ENCODE measurements at regions of chr5 and their contacts with region 1.

Region 1: GRCh38 chr5:177403792-177404640 is 3.6 kb upstream of the PFN3 start:
- DNase-seq: peak; percentile 89
- ATAC-seq: peak; percentile 87
- H3K4me3 Mint-ChIP-seq: peak overlapping the region; percentile 73
- H3K27ac Mint-ChIP-seq: peak overlapping the region; percentile 47
- H3K4me1 Mint-ChIP-seq: peaks cover 26% of the 10 kb centered on the region
- H3K27me3 Mint-ChIP-seq: peaks cover 23% of the 10 kb centered on the region
- CTCF ChIP-seq: peak; percentile 83

Region 2: DNA sequence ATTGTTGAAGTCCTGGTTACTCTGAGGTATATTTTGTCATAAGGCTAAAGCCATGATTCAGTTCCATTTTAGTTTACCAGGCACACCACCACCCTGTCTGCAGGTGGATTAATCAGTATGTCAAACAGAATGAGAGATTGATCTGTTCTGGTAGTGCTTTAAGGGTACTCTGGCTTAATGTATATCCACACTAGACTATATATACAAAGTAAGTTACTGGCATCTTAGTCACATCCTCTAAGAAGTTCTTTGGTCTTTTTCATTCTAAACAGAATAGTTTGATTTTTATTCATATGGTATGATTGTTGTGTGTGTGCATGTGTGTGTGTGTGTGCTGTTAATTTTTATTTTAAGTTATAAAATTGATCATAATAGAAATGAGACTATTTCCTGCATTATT is 162.2 kb before region 1 on chr5:
- CTCF ChIA-PET with region 1: no interaction called
- POLR2A ChIA-PET with region 1: no interaction called
- intact Hi-C with region 1: no loop called
- DNase-seq: no peak
- ATAC-seq: no peak
- H3K4me3 Mint-ChIP-seq: no peak overlapping the region
- H3K27ac Mint-ChIP-seq: no peak overlapping the region
- H3K4me1 Mint-ChIP-seq: no peaks in the 10 kb centered on the region
- H3K27me3 Mint-ChIP-seq: no peaks in the 10 kb centered on the region
- CTCF ChIP-seq: no peak

Region 3: GRCh38 chr5:177317959-177318377 is 86.0 kb before region 1 on chr5:
- CTCF ChIA-PET with region 1: interaction called, 58 read pairs
- POLR2A ChIA-PET with region 1: interaction called, 5 read pairs
- intact Hi-C with region 1: loop called (anchors 10 kb)
- DNase-seq: peak; percentile 90
- ATAC-seq: peak; percentile 76
- H3K4me3 Mint-ChIP-seq: no peak overlapping the region
- H3K27ac Mint-ChIP-seq: no peak overlapping the region
- H3K4me1 Mint-ChIP-seq: peaks cover 20% of the 10 kb centered on the region
- H3K27me3 Mint-ChIP-seq: no peaks in the 10 kb centered on the region
- CTCF ChIP-seq: peak; percentile 94

Region 4: GRCh38 chr5:177370488-177371119 is 33.4 kb before region 1 on chr5:
- CTCF ChIA-PET with region 1: interaction called, 39 read pairs
- POLR2A ChIA-PET with region 1: no interaction called
- intact Hi-C with region 1: no loop called
- DNase-seq: peak; percentile 63
- ATAC-seq: peak; percentile 65
- H3K4me3 Mint-ChIP-seq: no peak overlapping the region
- H3K27ac Mint-ChIP-seq: no peak overlapping the region
- H3K4me1 Mint-ChIP-seq: peaks cover 58% of the 10 kb centered on the region
- H3K27me3 Mint-ChIP-seq: no peaks in the 10 kb centered on the region
- CTCF ChIP-seq: no peak

Region 5: DNA sequence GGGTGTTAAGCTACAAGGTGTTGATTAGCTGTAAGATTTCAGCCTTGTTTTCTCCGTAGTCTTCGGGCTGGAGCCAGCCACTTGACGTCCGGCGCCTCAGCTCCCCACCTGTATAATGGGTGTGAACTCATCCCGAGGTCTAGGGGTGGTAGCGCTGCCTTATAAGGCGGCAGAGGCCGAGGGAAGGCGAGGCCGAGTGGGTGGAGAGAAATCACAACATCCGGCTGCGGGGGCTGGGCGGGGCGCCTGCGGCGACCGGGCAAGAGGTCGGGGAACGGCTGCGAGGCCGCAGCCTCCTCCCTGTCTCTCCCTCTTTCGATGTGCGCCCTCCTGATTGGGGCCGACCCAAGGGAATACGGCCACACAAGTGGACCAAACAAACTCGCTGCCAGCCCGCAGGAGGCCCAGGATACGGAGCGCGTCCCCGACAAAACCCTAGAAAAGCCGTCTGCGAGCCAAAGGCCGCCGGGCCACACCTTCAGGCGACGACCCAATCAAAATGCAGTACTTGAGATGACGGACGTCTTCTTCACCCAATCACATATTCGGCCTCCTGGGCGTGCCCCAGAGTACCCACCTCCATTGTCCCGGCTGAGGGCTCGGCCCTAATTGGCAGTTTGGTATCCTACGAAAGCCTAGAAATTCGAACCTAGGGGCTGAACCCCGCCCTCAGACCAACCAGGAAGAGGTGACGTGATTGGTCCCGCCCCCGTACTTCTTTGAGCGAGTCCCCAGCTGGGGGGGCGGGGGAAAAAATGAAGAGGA is 22.0 kb after region 1 on chr5:
- CTCF ChIA-PET with region 1: interaction called, 159 read pairs
- POLR2A ChIA-PET with region 1: interaction called, 45 read pairs
- intact Hi-C with region 1: no loop called
- DNase-seq: peak; percentile 100
- ATAC-seq: peak; percentile 79
- H3K4me3 Mint-ChIP-seq: peak overlapping the region; percentile 88
- H3K27ac Mint-ChIP-seq: peak overlapping the region; percentile 97
- H3K4me1 Mint-ChIP-seq: peaks cover 36% of the 10 kb centered on the region
- H3K27me3 Mint-ChIP-seq: no peaks in the 10 kb centered on the region
- CTCF ChIP-seq: no peak

Region 6: GRCh38 chr5:177446200-177447065 is 42.4 kb after region 1 on chr5 and contains the start of gene PRR7:
- CTCF ChIA-PET with region 1: interaction called, 415 read pairs
- POLR2A ChIA-PET with region 1: interaction called, 140 read pairs
- intact Hi-C with region 1: no loop called
- DNase-seq: peak; percentile 77
- ATAC-seq: peak; percentile 58
- H3K4me3 Mint-ChIP-seq: peak within 1 kb of the TSS; percentile 79
- H3K27ac Mint-ChIP-seq: peak within 1 kb of the TSS; percentile 80
- H3K4me1 Mint-ChIP-seq: peaks cover 43% of the 10 kb centered on the region
- H3K27me3 Mint-ChIP-seq: no peaks in the 10 kb centered on the region
- CTCF ChIP-seq: no peak
- total RNA-seq, gene PRR7: 32.6 to 36.4 TPM

Region 7: DNA sequence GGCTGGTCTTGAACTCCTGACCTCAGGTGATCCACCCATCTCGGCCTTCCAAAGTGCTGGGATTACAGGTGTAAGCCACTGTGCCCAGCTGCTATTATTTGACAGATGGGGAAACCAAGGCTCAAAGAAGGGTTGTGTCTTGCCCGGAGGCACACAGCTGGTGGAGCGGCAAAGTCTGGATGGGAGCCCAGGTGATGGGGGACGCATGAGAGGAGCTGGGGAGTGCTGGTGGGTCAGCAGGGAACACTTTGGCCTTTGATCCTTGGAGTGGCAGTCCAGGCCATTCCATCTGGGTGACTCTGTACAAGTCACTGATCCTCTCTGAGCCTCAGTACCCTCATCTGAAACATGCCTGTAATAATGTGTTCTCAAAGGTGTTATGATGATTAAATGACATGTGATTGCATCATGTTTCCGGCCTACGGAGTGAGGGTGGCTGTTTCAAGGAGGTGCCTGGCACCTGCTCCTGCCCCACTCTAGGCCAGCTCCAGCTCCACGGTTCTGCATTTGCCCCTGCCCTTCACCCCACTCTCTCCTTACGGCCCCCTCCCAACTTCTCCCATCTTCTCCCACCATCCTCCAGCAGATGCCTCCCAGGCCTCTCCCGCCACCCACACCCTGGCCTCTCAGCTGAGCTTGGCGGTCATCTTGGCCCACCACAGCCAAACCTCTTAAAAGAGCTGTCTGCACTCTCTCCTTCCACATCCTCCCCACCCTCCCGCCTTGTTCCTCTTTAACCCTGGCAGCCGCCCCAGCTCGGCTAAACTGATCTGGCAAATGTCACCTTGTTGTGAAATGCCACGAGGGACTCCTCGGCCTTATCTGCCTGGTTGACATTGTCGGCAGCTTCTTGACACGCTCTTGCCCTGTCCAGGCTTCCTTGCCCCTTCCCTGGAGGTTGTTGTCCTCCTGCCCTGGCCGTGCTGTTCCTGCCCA is 75.0 kb after region 1 on chr5:
- CTCF ChIA-PET with region 1: interaction called, 29 read pairs
- POLR2A ChIA-PET with region 1: no interaction called
- intact Hi-C with region 1: no loop called
- DNase-seq: peak; percentile 80
- ATAC-seq: peak; percentile 76
- H3K4me3 Mint-ChIP-seq: peak overlapping the region; percentile 32
- H3K27ac Mint-ChIP-seq: peak overlapping the region; percentile 98
- H3K4me1 Mint-ChIP-seq: peaks cover 52% of the 10 kb centered on the region
- H3K27me3 Mint-ChIP-seq: no peaks in the 10 kb centered on the region
- CTCF ChIP-seq: no peak